ENCODE measurements at regions of chr1 and their contacts with region 1.

Region 1: GRCh38 chr1:243946946-243947345 is 96.9 kb upstream of the AKT3 start:
- DNase-seq: peak; percentile 52
- H3K4me3 ChIP-seq: no peak overlapping the region
- H3K27ac ChIP-seq: no peak overlapping the region
- H3K4me1 ChIP-seq: peaks cover 5% of the 10 kb centered on the region
- H3K27me3 ChIP-seq: no peaks in the 10 kb centered on the region
- CTCF ChIP-seq: peak; percentile 60 to 66
- POLR2A ChIP-seq: no peak

Region 2: DNA sequence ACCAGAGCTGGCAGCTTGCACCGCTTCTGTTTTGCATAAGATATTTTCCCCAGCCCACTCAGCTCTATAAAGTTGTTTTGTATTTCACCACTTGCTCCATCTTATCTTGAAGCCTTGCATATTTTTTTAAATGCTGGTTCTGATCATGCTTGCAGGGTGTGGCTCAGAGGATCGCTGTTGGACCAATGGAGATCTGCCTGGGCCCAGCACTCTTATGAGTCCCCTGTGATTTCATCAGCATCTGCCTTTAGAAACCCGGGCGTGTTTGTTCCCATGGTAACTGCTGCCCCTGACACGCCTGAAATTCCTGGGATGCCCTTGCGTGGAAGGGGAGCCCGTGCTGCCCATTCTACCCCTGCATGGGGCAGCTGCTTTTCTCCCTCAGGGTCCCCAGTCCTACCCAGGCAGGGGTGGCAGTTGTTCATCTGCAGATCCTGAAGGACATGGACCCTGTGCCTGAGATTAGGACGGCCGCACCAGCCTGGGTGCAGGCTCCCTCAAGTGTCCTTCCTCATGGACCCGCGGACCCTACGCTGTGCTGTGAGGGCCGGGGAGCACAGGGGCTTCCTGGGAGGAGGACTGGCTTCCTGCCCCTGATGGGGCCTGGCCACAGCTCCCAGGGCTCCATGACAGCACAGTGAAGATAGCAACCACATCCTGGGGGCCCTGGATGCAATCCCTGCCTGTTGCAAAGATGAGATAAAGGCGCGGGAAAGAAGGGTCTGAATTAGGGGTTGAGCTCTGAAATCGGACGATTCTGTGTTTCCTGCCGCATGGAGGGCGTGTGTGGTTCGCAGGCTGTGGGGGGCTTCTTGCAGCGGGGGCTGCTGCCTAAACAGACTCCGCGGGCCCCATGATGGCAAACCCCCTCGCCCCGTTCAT is 464.6 kb before region 1 on chr1:
- CTCF ChIA-PET with region 1: no interaction called
- POLR2A ChIA-PET with region 1: no interaction called
- dilution Hi-C with region 1: no loop called
- intact Hi-C with region 1: loop called (anchors 2 kb)
- DNase-seq: no peak
- H3K4me3 ChIP-seq: peak overlapping the region in 1 of 3 experiments; percentile 8
- H3K27ac ChIP-seq: no peak overlapping the region
- H3K4me1 ChIP-seq: peaks cover 2% of the 10 kb centered on the region
- H3K27me3 ChIP-seq: no peaks in the 10 kb centered on the region
- CTCF ChIP-seq: no peak
- POLR2A ChIP-seq: no peak

Region 3: GRCh38 chr1:243926803-243927279 is 20.1 kb before region 1 on chr1:
- CTCF ChIA-PET with region 1: interaction called, 11 read pairs
- POLR2A ChIA-PET with region 1: no interaction called
- dilution Hi-C with region 1: no loop called
- intact Hi-C with region 1: no loop called
- DNase-seq: peak; percentile 96
- H3K4me3 ChIP-seq: peak overlapping the region in 1 of 3 experiments; percentile 1
- H3K27ac ChIP-seq: peak overlapping the region; percentile 78
- H3K4me1 ChIP-seq: peaks cover 37% of the 10 kb centered on the region
- H3K27me3 ChIP-seq: no peaks in the 10 kb centered on the region
- CTCF ChIP-seq: no peak
- POLR2A ChIP-seq: peak; percentile 64

Region 4: DNA sequence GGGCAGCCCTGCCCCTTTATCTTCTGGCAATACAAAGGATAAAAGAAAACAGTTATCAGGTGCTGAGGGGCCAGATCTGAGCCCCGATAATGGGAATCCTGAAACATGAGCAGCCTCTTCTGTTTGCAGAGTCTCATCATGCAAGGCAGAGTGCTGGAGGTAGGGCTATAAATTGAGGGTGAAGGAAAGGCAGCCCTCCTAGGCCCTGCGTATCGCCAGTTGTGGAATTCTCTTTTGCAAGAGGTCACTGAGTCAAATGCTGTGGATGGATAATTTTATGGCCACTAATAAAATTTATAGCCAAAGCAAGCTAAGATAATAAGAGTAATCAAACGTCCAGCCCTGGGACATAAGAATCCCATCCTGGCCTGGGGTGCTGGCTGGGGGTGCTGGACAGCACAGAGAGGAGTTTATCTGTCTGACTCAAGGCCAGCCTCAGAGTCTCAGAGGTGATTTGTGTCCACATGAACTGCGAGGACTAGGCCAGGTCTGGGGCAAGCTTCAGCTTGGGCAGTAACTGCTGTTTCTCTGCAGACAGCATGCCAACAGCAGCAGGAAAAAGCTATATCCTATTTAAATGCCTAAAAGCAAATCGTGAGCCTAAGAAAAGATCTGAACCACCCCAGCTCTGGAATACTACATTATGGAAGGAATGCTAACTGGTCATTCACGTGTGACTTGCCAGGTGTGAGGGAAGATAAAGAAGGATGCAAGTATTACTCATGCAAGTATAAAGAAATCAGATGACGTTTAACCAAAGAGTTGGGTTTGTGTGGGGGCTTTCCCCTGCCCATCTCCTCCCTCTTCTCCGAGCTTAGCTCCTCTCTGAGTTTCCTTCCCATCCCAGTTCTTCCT is 1462.6 kb after region 1 on chr1:
- CTCF ChIA-PET with region 1: no interaction called
- POLR2A ChIA-PET with region 1: no interaction called
- dilution Hi-C with region 1: no loop called
- intact Hi-C with region 1: no loop called
- DNase-seq: no peak
- H3K4me3 ChIP-seq: no peak overlapping the region
- H3K27ac ChIP-seq: no peak overlapping the region
- H3K4me1 ChIP-seq: no peaks in the 10 kb centered on the region
- H3K27me3 ChIP-seq: no peaks in the 10 kb centered on the region
- CTCF ChIP-seq: no peak
- POLR2A ChIP-seq: no peak